HEK293T (cell line): ENCODE measurements at regions of chr3 and their contacts with region 1.

Region 1: GRCh38 chr3:30011237-30011803 is 595.1 kb upstream of the TGFBR2 start:
- DNase-seq: no peak

Region 2: GRCh38 chr3:29871087-29871486 is 140.2 kb before region 1 on chr3:
- CTCF ChIA-PET with region 1: interaction called, 10 read pairs
- POLR2A ChIA-PET with region 1: no interaction called
- DNase-seq: peak; percentile 5